Uterus (tissue), 4 donors: ENCODE measurements at regions of chr6 and their contacts with region 1.

Region 1: DNA sequence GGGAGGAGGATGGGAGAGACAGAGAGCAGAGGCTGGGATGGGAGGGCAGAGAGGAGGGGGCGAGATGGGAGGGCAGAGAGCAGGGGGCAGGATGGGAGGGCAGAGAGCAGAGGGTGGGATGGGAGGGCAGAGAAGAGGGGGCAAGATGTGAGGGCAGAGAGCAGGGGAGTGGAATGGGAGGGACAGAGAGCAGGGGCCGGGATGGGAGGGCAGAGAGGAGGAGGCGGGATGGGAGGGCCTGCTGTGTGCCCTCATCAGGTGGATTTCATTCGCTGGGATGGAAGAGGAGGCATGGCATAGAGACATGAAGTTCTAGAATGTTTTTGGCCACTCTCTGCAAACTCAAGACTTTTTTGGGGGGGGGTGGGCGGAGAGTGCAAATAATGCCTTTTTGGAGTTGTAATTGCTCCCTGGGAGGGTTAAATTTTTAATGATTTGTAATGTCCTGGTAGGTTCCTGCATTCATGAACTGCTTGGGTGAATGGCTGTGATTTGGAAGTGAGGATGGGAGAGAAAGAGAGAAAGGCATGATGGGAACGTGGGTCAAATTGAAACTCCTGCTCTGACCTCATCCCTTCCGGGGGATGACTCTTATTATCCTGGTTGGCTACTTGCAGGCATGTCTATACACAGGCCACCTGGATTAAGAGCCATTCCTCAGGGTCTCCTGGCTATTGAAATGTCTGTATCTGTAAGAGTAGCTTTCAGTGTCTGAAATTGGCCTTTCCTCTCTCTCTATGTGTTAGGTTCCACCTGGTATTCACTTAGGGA is 162.4 kb upstream of the AGPAT4 start:
- DNase-seq: no peak
- H3K4me3 ChIP-seq: no peak overlapping the region
- H3K27ac ChIP-seq: no peak overlapping the region
- H3K4me1 ChIP-seq: peaks cover 0 to 3% of the 10 kb centered on the region in 2 donors
- H3K27me3 ChIP-seq: no peaks in the 10 kb centered on the region
- CTCF ChIP-seq: no peak
- POLR2A ChIP-seq: no peak

Region 2: GRCh38 chr6:161341638-161342433 is 94.5 kb before region 1 on chr6:
- intact Hi-C with region 1: no loop called
- DNase-seq: no peak
- H3K4me3 ChIP-seq: no peak overlapping the region
- H3K27ac ChIP-seq: no peak overlapping the region
- H3K4me1 ChIP-seq: no peaks in the 10 kb centered on the region
- H3K27me3 ChIP-seq: no peaks in the 10 kb centered on the region
- CTCF ChIP-seq: no peak
- POLR2A ChIP-seq: no peak

Region 3: GRCh38 chr6:161393839-161394364 is 42.4 kb before region 1 on chr6:
- intact Hi-C with region 1: loop called (anchors 2 kb)
- DNase-seq: peak in 1 of 2 donors; percentile 58
- H3K4me3 ChIP-seq: no peak overlapping the region
- H3K27ac ChIP-seq: no peak overlapping the region
- H3K4me1 ChIP-seq: no peaks in the 10 kb centered on the region
- H3K27me3 ChIP-seq: no peaks in the 10 kb centered on the region
- CTCF ChIP-seq: peak; percentile 52 to 74 (median 62)
- POLR2A ChIP-seq: no peak